ENCODE measurements at regions of chr4 and their contacts with region 1.

Region 1: GRCh38 chr4:38889143-38889542 is 21.5 kb downstream of the FAM114A1 start:
- DNase-seq: peak; percentile 68
- H3K4me3 Mint-ChIP-seq: peak overlapping the region; percentile 63
- H3K27ac Mint-ChIP-seq: peak overlapping the region; percentile 95
- H3K4me1 Mint-ChIP-seq: peaks cover 34% of the 10 kb centered on the region
- H3K27me3 Mint-ChIP-seq: no peaks in the 10 kb centered on the region

Region 2: DNA sequence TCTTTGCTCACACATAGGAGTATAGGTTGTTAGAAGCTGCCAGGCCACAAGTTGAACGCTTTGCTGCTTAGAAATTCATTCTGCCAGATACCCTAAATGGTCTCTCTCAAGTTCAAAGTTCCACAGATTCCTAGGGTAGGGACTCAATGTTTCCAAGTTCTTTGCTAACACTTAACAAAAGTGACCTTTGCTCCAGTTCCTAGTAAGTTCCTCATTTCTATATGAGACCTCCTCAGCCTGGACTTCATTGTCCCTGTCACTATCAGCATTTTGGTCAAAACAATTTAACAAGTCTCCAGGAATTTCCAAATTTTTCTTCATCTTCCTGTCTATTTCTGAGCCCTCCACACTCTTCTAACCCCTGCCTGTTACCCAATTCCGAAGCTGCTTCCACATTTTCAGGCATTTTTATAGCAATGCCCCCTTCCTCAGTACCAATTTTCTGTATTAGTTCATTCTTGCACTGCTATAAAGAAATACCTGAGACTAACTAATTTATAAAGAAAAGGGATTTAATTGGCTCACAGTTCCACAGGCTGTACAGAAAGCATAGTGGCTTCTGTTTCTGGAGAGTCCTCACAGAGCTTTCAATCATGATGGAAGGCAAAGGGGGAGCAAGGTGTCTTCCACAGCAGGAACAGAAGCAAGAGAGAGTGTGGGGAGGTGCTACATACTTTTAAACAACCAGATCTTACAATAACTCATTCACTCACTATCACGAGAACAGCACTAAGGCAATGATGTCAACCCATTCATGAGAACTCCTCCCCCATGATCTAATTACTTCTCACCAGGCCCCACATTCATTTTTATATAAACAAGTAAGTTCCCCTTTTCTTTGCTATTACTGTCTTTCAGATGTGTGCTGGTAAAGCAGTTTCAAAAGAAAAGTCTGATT is 73.0 kb before region 1 on chr4:
- intact Hi-C with region 1: loop called (anchors 5 kb)
- DNase-seq: peak; percentile 42
- H3K4me3 Mint-ChIP-seq: no peak overlapping the region
- H3K27ac Mint-ChIP-seq: no peak overlapping the region
- H3K4me1 Mint-ChIP-seq: peaks cover 23% of the 10 kb centered on the region
- H3K27me3 Mint-ChIP-seq: peaks cover 4% of the 10 kb centered on the region

Region 3: GRCh38 chr4:38958453-38959190 is 69.5 kb after region 1 on chr4:
- intact Hi-C with region 1: loop called (anchors 1 kb)
- DNase-seq: no peak
- H3K4me3 Mint-ChIP-seq: peak overlapping the region; percentile 56
- H3K27ac Mint-ChIP-seq: peak overlapping the region; percentile 97
- H3K4me1 Mint-ChIP-seq: peaks cover 41% of the 10 kb centered on the region
- H3K27me3 Mint-ChIP-seq: no peaks in the 10 kb centered on the region

Region 4: DNA sequence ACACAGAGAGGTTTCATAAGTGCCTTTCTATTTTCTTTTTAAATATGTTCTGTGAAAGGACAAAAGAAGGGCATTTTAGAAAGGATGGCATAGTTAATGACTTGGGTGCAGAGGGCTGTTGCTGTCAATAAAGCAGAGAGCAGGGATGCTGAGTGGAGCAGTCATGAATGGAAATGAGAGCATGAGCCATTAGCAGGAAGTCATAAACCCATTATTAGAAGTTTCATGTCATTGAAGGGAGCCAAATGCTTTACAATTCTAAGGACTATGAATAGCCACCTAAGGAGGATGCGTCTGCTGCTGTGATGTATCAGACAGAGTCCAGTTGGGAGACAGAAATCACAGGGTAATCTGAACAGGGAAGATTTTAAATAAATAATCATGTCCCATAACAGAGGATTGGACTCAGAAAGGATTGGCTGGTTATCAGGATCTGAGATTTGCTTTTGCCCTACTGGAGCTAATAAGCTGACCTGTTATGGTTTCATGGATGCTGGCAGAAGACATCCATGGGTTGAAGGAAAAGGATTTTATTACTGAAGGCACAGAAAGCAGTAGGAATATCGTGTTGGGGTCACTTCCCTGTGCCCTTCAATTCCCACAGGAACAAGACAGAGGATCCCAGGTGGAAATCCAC is 245.7 kb after region 1 on chr4:
- intact Hi-C with region 1: loop called (anchors 1 kb)
- DNase-seq: no peak
- H3K4me3 Mint-ChIP-seq: no peak overlapping the region
- H3K27ac Mint-ChIP-seq: peak overlapping the region; percentile 36
- H3K4me1 Mint-ChIP-seq: peaks cover 13% of the 10 kb centered on the region
- H3K27me3 Mint-ChIP-seq: no peaks in the 10 kb centered on the region

Region 5: DNA sequence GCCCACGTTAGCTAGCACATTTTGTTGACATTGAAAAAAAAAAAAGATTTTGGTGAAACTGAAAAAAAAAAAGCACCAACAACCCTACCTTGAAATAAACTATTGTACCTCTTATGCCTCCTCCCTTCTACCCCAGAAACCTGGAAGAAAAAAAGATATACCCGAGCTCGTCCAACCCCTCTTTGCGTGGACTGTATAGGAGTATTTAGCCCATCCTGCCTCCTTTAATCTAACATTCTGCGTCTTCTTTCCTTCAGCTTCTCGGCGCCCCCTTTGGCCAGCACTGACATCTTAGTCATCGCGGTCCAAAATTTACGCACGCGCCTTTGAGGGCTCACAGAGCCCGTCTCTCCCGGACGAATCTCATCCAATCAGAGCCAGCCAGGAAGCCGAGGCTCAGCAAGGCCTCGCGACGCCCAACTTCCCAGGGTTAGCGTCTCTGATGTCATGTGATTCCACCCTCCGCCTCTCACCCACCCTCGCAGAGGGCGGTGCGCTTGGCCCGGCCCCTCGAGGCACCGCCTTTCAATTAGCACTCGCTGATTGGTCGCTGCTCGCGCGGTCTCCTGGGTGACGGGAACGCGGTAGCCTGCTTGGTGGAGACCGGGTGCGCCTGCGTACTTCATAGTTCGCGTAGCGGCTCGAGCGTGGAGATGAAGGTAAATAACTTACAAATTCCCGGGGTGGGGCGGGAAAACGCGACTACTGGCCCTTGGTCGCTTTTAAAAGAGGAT is 292.9 kb after region 1 on chr4 and contains the start of gene WDR19:
- intact Hi-C with region 1: loop called (anchors 1 kb)
- DNase-seq: peak; percentile 100
- H3K4me3 Mint-ChIP-seq: no peak within 1 kb of the TSS
- H3K27ac Mint-ChIP-seq: no peak within 1 kb of the TSS
- H3K4me1 Mint-ChIP-seq: peaks cover 7% of the 10 kb centered on the region
- H3K27me3 Mint-ChIP-seq: peaks cover 6% of the 10 kb centered on the region
- total RNA-seq, gene WDR19: 12.1 and 15.6 TPM in 2 replicates

Measured in activated CD4-positive, alpha-beta T cell treated with anti-CD3 and anti-CD28 coated beads, Interleukin-2, amount 10 ng/mL, durations not matched to agents 24 days and 14 days (primary cell).